AG04450 (cell line): ENCODE measurements at regions of chr11 and their contacts with region 1.

Region 1: GRCh38 chr11:86291466-86292262 is 10.4 kb upstream of the HIKESHI start:
- DNase-seq: no peak
- H3K4me3 ChIP-seq: no peak overlapping the region
- H3K27ac ChIP-seq: no peak overlapping the region
- H3K27me3 ChIP-seq: no peaks in the 10 kb centered on the region
- CTCF ChIP-seq: peak; percentile 71

Region 2: GRCh38 chr11:85946221-85946620 is 345.4 kb before region 1 on chr11:
- CTCF ChIA-PET with region 1: interaction called, 10 read pairs
- POLR2A ChIA-PET with region 1: no interaction called
- DNase-seq: no peak
- H3K4me3 ChIP-seq: no peak overlapping the region
- H3K27ac ChIP-seq: no peak overlapping the region
- H3K27me3 ChIP-seq: no peaks in the 10 kb centered on the region
- CTCF ChIP-seq: no peak

Region 3: GRCh38 chr11:86261331-86261730 is 30.3 kb before region 1 on chr11:
- CTCF ChIA-PET with region 1: interaction called, 7 read pairs
- POLR2A ChIA-PET with region 1: interaction called, 11 read pairs
- DNase-seq: no peak
- H3K4me3 ChIP-seq: no peak overlapping the region
- H3K27ac ChIP-seq: no peak overlapping the region
- H3K27me3 ChIP-seq: no peaks in the 10 kb centered on the region
- CTCF ChIP-seq: no peak

Region 4: DNA sequence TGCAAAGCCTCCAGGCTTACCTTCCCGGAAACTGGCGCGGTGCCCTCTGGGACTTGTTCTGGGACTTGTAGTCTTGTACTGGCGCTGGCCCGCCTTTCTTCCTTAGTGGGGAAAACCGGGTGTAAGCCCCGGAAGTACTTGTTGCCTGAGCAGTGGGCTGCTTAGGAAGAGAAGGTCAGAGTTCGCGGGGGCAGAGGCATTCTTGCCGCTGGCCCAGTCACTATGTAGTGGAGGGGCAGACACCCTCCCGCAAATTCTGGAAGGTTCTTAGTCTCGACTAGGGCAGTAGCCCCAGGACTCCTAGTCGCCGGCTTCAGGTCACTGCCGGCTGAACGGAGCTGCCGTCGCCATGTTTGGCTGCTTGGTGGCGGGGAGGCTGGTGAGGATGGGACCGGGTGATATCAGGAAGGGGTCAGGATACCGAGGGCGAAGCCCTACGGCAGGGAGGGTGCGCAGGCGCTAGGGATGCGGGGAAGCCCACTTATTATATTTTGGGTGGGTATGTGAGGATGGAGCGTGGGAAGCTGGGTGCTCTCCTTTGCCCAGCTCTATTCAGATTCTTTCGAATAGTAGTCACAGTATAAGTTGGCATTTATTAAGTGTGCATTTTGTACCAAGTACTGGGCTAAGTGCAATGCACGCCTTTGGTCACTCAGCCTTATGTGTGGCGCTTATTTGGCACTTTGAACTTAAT is 10.6 kb after region 1 on chr11 and contains the start of gene HIKESHI:
- CTCF ChIA-PET with region 1: interaction called, 10 read pairs
- POLR2A ChIA-PET with region 1: no interaction called
- DNase-seq: peak; percentile 93
- H3K4me3 ChIP-seq: peak within 1 kb of the TSS; percentile 74
- H3K27ac ChIP-seq: no peak within 1 kb of the TSS
- H3K27me3 ChIP-seq: no peaks in the 10 kb centered on the region
- CTCF ChIP-seq: no peak
- polyA plus RNA-seq, gene HIKESHI: 120 and 129 TPM in 2 replicates